ENCODE measurements at regions of chr6 and their contacts with region 1.

Region 1: GRCh38 chr6:156988276-156989158 is 211.3 kb downstream of the ARID1B start:
- DNase-seq: no peak
- ATAC-seq: no peak
- H3K4me3 ChIP-seq: no peak overlapping the region
- H3K27ac ChIP-seq: no peak overlapping the region
- H3K4me1 ChIP-seq: peaks cover 43% of the 10 kb centered on the region
- H3K27me3 ChIP-seq: no peaks in the 10 kb centered on the region
- CTCF ChIP-seq: no peak

Region 2: GRCh38 chr6:156839591-156840001 is 148.9 kb before region 1 on chr6:
- CTCF ChIA-PET with region 1: no interaction called
- POLR2A ChIA-PET with region 1: no interaction called
- intact Hi-C with region 1: no loop called
- DNase-seq: no peak
- ATAC-seq: no peak
- H3K4me3 ChIP-seq: no peak overlapping the region
- H3K27ac ChIP-seq: no peak overlapping the region
- H3K4me1 ChIP-seq: no peaks in the 10 kb centered on the region
- H3K27me3 ChIP-seq: no peaks in the 10 kb centered on the region
- CTCF ChIP-seq: no peak

Region 3: DNA sequence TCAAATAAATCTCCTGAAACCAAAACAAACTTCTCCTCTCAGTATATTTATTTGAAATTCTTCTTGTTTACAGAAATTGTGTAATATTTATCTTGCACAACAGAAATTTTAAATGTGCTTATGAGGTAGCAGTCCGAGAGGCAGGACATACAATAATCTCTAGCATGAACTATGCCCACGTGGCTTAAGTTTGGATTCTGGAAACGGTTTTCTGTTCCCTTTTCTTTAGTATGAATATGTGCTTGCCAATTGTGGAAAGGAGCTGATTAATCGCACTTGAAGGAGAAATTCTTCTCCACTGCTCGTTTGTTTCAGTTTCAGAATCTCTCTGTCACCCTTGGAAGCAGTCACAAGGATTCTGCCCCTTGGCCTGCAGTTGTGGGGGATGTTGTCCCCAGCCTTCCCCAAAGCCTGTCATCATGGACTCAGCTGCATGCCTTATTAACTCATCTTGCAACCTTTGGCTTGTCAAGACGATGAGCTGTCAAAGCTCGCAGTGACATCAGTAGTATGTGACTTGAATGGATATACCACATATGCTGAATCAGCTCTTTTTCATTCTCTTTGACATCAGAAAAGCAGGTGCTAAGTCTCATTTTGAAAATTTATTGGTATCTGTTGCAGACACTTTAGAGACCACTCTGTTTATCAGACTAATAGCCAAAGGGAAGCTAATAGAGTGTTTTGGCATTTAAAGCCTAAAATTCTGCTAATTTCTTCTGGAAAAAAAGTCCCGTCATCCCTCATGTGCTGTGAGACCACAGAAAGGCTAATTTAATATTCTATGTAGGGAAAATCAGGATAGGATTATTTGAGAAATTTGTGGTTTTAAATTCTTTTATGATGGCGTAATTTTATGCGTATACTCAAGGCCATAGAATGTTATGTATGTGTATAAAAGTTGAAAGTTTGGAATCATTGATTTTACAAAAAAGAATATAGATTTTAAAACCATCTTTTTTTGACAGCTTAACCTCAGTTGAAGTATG is 24.5 kb before region 1 on chr6:
- CTCF ChIA-PET with region 1: no interaction called
- POLR2A ChIA-PET with region 1: no interaction called
- intact Hi-C with region 1: loop called (anchors 2 kb)
- DNase-seq: peak; percentile 58
- ATAC-seq: peak; percentile 68
- H3K4me3 ChIP-seq: peak overlapping the region; percentile 56
- H3K27ac ChIP-seq: peak overlapping the region; percentile 49
- H3K4me1 ChIP-seq: peaks cover 23% of the 10 kb centered on the region
- H3K27me3 ChIP-seq: no peaks in the 10 kb centered on the region
- CTCF ChIP-seq: no peak

Region 4: DNA sequence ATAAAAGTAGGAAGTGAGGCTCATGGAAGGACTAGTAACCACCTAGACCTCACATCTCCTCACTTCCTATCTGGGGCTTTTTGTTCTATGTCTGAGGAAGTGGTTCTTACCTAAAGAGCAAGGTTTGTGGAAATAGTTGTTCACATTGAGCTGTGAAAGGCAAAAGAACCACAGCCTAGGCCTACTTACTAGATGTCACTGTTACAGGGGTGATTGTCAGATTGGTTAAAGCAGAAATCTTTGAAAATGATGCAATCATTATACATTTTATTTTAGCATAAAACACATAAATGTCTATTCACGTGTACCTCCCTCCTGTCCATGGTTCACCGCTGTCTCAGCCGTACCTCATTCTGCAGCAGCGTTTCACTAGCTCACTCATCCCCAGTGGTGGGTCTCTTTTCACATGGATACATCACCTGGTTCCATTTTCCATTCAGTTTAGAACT is 66.0 kb after region 1 on chr6:
- CTCF ChIA-PET with region 1: no interaction called
- POLR2A ChIA-PET with region 1: no interaction called
- intact Hi-C with region 1: no loop called
- DNase-seq: no peak
- ATAC-seq: no peak
- H3K4me3 ChIP-seq: no peak overlapping the region
- H3K27ac ChIP-seq: no peak overlapping the region
- H3K4me1 ChIP-seq: no peaks in the 10 kb centered on the region
- H3K27me3 ChIP-seq: no peaks in the 10 kb centered on the region
- CTCF ChIP-seq: no peak